Activated CD8-positive, alpha-beta T cell treated with anti-CD3 and anti-CD28 coated beads for 36 hours (primary cell): ENCODE measurements at regions of chr10 and their contacts with region 1.

Region 1: GRCh38 chr10:7872041-7872442 is 53.7 kb downstream of the TAF3 start:
- DNase-seq: no peak
- ATAC-seq: no peak
- H3K4me3 Mint-ChIP-seq: peak overlapping the region; percentile 70
- H3K27ac Mint-ChIP-seq: no peak overlapping the region
- H3K4me1 Mint-ChIP-seq: peaks cover 22% of the 10 kb centered on the region
- H3K27me3 Mint-ChIP-seq: no peaks in the 10 kb centered on the region
- CTCF ChIP-seq: peak; percentile 96

Region 2: GRCh38 chr10:7722927-7723529 is 149.0 kb before region 1 on chr10:
- CTCF ChIA-PET with region 1: no interaction called
- POLR2A ChIA-PET with region 1: no interaction called
- intact Hi-C with region 1: no loop called
- DNase-seq: no peak
- ATAC-seq: no peak
- H3K4me3 Mint-ChIP-seq: no peak overlapping the region
- H3K27ac Mint-ChIP-seq: no peak overlapping the region
- H3K4me1 Mint-ChIP-seq: no peaks in the 10 kb centered on the region
- H3K27me3 Mint-ChIP-seq: peaks cover 9% of the 10 kb centered on the region
- CTCF ChIP-seq: no peak

Region 3: DNA sequence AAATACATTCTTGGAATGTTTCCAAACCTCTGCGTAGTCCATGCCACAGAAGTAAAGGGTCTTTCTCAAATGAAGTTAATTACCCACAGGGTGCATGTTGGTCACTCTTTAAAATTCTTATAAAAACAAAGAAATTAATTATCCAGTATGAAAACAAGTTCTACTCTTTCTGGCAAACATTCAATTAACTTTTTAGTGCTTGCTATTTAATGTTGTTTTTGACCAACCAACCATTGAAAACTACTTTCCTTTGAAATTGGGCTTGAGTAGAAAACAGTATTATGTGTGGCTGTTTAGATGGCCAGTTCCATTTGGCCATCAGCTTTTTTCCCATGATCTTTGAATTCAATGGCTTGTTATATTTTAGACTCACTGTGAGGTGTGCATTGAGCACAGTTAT is 29.2 kb after region 1 on chr10:
- CTCF ChIA-PET with region 1: no interaction called
- POLR2A ChIA-PET with region 1: no interaction called
- intact Hi-C with region 1: no loop called
- DNase-seq: no peak
- ATAC-seq: no peak
- H3K4me3 Mint-ChIP-seq: no peak overlapping the region
- H3K27ac Mint-ChIP-seq: no peak overlapping the region
- H3K4me1 Mint-ChIP-seq: peaks cover 27% of the 10 kb centered on the region
- H3K27me3 Mint-ChIP-seq: no peaks in the 10 kb centered on the region
- CTCF ChIP-seq: no peak

Region 4: DNA sequence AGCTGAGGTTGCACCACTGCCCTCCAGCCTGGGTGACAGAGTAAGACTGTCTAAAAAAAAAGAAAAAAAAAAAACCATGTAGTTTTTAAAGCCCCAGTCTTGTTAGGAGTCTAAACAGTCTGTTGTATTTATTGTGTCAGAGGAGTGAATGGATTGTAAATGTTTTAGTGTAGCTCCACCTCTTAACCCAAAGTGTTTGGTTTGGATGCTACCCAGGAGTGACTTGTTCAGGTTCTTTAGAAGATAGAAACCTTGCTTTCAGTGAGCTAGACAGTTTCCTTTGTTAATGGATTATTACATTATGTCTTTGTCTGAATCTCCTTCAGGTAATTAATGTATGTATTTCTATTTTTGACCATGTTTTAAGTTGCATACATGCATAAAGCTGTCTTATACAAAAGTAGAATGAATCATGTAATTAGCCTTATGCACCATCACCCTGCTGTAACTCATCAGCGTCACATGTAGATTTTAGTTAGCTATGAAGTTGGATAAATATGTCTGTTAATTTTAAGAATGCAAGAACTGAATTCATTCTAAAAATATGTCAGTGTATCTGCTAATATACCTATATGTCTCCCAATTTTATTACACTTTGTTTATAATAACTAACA is 44.0 kb after region 1 on chr10:
- CTCF ChIA-PET with region 1: no interaction called
- POLR2A ChIA-PET with region 1: no interaction called
- intact Hi-C with region 1: no loop called
- DNase-seq: no peak
- ATAC-seq: no peak
- H3K4me3 Mint-ChIP-seq: no peak overlapping the region
- H3K27ac Mint-ChIP-seq: no peak overlapping the region
- H3K4me1 Mint-ChIP-seq: peaks cover 10% of the 10 kb centered on the region
- H3K27me3 Mint-ChIP-seq: no peaks in the 10 kb centered on the region
- CTCF ChIP-seq: no peak

Region 5: GRCh38 chr10:9209105-9209798 is 1337.2 kb after region 1 on chr10:
- CTCF ChIA-PET with region 1: interaction called, 3 read pairs
- POLR2A ChIA-PET with region 1: no interaction called
- intact Hi-C with region 1: loop called (anchors 5 kb)
- DNase-seq: peak; percentile 86
- ATAC-seq: peak; percentile 87
- H3K4me3 Mint-ChIP-seq: no peak overlapping the region
- H3K27ac Mint-ChIP-seq: peak overlapping the region; percentile 52
- H3K4me1 Mint-ChIP-seq: peaks cover 10% of the 10 kb centered on the region
- H3K27me3 Mint-ChIP-seq: peaks cover 12% of the 10 kb centered on the region
- CTCF ChIP-seq: peak; percentile 94

Region 6: GRCh38 chr10:9302120-9302746 is 1430.2 kb after region 1 on chr10:
- CTCF ChIA-PET with region 1: interaction called, 4 read pairs
- POLR2A ChIA-PET with region 1: no interaction called
- intact Hi-C with region 1: loop called (anchors 5 kb)
- DNase-seq: peak; percentile 19
- ATAC-seq: peak; percentile 37
- H3K4me3 Mint-ChIP-seq: no peak overlapping the region
- H3K27ac Mint-ChIP-seq: no peak overlapping the region
- H3K4me1 Mint-ChIP-seq: no peaks in the 10 kb centered on the region
- H3K27me3 Mint-ChIP-seq: peaks cover 10% of the 10 kb centered on the region
- CTCF ChIP-seq: peak; percentile 50

Region 7: GRCh38 chr10:9645928-9646600 is 1774.0 kb after region 1 on chr10:
- CTCF ChIA-PET with region 1: no interaction called
- POLR2A ChIA-PET with region 1: no interaction called
- intact Hi-C with region 1: no loop called
- DNase-seq: no peak
- ATAC-seq: no peak
- H3K4me3 Mint-ChIP-seq: no peak overlapping the region
- H3K27ac Mint-ChIP-seq: no peak overlapping the region
- H3K4me1 Mint-ChIP-seq: no peaks in the 10 kb centered on the region
- H3K27me3 Mint-ChIP-seq: peaks cover 3% of the 10 kb centered on the region
- CTCF ChIP-seq: no peak